HepG2 (cell line): ENCODE measurements at regions of chr3 and their contacts with region 1.

Region 1: GRCh38 chr3:20511863-20512505 is 326.0 kb upstream of the SGO1 start:
- DNase-seq: peak; percentile 43
- ATAC-seq: peak; percentile 99
- H3K4me3 ChIP-seq: no peak overlapping the region
- H3K27ac ChIP-seq: no peak overlapping the region
- H3K4me1 ChIP-seq: no peaks in the 10 kb centered on the region
- H3K27me3 ChIP-seq: no peaks in the 10 kb centered on the region
- CTCF ChIP-seq: peak; percentile 85
- EP300 ChIP-seq: no peak
- POLR2A ChIP-seq: no peak
- RAD21 ChIP-seq: peak; percentile 76

Region 2: GRCh38 chr3:19825193-19825592 is 686.8 kb before region 1 on chr3:
- CTCF ChIA-PET with region 1: no interaction called
- POLR2A ChIA-PET with region 1: no interaction called
- in situ Hi-C with region 1: no loop called
- intact Hi-C with region 1: no loop called
- DNase-seq: no peak
- ATAC-seq: no peak
- H3K4me3 ChIP-seq: no peak overlapping the region
- H3K27ac ChIP-seq: no peak overlapping the region
- H3K4me1 ChIP-seq: no peaks in the 10 kb centered on the region
- H3K27me3 ChIP-seq: no peaks in the 10 kb centered on the region
- CTCF ChIP-seq: no peak
- EP300 ChIP-seq: no peak
- POLR2A ChIP-seq: no peak
- RAD21 ChIP-seq: no peak

Region 3: GRCh38 chr3:20668411-20668810 is 156.4 kb after region 1 on chr3:
- CTCF ChIA-PET with region 1: no interaction called
- POLR2A ChIA-PET with region 1: no interaction called
- in situ Hi-C with region 1: no loop called
- intact Hi-C with region 1: loop called (anchors 10 kb)
- DNase-seq: peak; percentile 2
- ATAC-seq: peak; percentile 77
- H3K4me3 ChIP-seq: no peak overlapping the region
- H3K27ac ChIP-seq: no peak overlapping the region
- H3K4me1 ChIP-seq: no peaks in the 10 kb centered on the region
- H3K27me3 ChIP-seq: no peaks in the 10 kb centered on the region
- CTCF ChIP-seq: no peak
- EP300 ChIP-seq: no peak
- POLR2A ChIP-seq: no peak
- RAD21 ChIP-seq: no peak

Region 4: DNA sequence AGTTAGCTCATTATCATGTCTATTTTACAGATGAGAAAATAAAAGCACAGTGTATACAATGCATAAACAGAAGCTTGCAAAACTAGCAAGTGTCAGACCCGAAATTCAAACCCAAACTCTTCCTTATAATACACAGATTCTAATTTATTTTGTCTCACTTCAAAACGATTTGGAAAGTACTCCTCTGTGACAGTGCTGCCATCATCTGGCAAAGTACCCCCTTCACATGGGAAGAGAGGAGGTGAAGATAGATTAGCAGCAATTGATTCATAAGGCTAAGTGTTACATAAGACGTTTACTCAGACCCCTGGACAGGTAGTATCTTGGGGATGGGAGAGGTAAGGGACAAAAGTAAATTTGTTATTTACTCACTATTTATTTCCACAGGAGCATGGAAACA is 418.1 kb after region 1 on chr3:
- CTCF ChIA-PET with region 1: no interaction called
- POLR2A ChIA-PET with region 1: no interaction called
- in situ Hi-C with region 1: no loop called
- intact Hi-C with region 1: loop called (anchors 2 kb)
- DNase-seq: no peak
- ATAC-seq: no peak
- H3K4me3 ChIP-seq: no peak overlapping the region
- H3K27ac ChIP-seq: no peak overlapping the region
- H3K4me1 ChIP-seq: no peaks in the 10 kb centered on the region
- H3K27me3 ChIP-seq: no peaks in the 10 kb centered on the region
- CTCF ChIP-seq: peak; percentile 51
- EP300 ChIP-seq: no peak
- POLR2A ChIP-seq: no peak
- RAD21 ChIP-seq: peak; percentile 39; the same call in 1 of the 2 replicates

Region 5: DNA sequence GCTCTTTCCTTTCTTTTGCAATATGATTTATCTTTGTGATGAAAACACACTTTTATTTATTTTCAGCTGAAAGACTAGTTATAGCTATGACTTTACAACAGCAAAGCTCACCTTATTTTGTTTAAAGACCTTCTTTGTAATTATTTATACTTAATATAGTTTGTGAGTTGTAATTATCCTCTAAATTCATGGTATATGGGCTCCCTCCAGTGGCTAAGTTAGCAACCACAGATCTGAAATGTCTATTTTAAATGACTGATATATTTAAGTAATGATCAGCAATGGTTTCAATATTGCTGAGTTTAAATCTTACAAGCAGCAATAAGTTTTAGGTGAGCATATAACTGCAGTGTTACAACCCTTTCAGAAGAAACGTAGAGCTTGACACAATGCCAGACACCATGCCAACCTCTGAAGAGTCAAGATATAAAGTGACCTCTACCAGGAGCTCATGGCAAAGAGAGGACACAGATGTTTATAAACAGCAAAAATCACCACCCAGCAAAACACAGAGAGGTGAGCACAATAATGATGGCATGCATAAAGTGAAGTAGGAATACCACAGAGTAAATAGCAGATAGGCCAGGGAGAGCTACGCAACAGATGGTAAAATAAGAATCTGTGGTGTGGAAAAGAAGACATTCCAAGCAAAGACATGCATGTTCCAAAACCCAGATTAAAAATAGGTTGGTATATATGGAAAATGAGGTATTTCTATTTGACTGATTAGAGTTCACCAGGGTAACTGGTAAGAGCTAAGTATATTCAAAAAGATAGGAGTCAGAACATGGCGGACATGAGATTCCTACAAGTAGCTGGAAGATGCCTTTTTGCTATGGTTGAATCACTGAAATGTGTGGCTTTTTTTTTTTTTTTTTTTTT is 1382.7 kb after region 1 on chr3:
- CTCF ChIA-PET with region 1: no interaction called
- POLR2A ChIA-PET with region 1: no interaction called
- in situ Hi-C with region 1: no loop called
- intact Hi-C with region 1: loop called (anchors 2 kb)
- DNase-seq: no peak
- ATAC-seq: no peak; the same call in 2 of the 3 replicates
- H3K4me3 ChIP-seq: no peak overlapping the region
- H3K27ac ChIP-seq: no peak overlapping the region
- H3K4me1 ChIP-seq: no peaks in the 10 kb centered on the region
- H3K27me3 ChIP-seq: no peaks in the 10 kb centered on the region
- CTCF ChIP-seq: peak; percentile 24; the same call in 1 of the 2 replicates
- EP300 ChIP-seq: no peak
- POLR2A ChIP-seq: no peak
- RAD21 ChIP-seq: no peak